ENCODE measurements at regions of chrX and their contacts with region 1.

Region 1: DNA sequence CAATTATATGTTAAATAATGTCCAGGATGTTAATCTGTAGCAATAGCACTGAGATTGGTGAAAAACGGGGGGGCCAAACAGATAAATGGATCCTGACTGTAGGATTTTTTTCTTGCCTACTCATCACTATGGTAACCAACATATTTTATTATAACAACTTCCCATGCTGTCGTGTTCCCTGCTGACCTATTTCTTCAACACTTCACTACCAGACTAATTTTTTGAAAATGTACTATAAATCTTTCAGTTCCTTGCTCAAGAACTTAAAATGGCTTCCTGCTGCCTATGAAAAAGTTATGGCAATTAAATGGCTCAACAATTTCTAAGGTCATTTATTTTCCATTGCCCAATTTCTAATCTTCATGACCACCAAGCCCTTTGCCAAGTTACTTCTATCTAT is 38.9 kb upstream of the CFAP47 start:
- DNase-seq: no peak
- H3K4me3 ChIP-seq: no peak overlapping the region
- H3K27ac ChIP-seq: no peak overlapping the region
- H3K4me1 ChIP-seq: no peaks in the 10 kb centered on the region
- H3K27me3 ChIP-seq: no peaks in the 10 kb centered on the region
- CTCF ChIP-seq: no peak
- EP300 ChIP-seq: no peak
- POLR2A ChIP-seq: no peak

Region 2: DNA sequence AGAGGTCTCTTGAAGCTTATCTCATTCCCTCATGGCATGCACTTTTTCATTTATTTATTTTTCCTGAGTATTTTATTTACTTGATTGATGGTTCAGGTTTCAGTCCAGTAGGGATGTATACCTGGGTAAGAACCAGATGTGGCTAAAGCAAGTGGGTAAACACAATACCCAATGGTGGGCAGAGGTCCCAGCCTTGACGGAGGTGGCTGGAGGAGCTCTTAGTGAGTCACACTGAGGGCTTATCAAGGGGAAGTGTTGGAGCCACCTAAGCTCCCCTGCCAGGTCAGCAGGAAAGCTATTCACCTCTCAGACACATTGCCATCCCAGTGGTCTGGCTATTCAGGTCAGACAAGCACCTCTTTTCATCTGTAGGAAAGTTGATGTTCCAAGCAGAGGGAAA is 318.6 kb before region 1 on chrX:
- intact Hi-C with region 1: no loop called
- DNase-seq: no peak
- H3K4me3 ChIP-seq: no peak overlapping the region
- H3K27ac ChIP-seq: no peak overlapping the region
- H3K4me1 ChIP-seq: no peaks in the 10 kb centered on the region
- H3K27me3 ChIP-seq: no peaks in the 10 kb centered on the region
- CTCF ChIP-seq: no peak
- EP300 ChIP-seq: no peak
- POLR2A ChIP-seq: no peak

Region 3: GRCh38 chrX:36849407-36849806 is 968.8 kb after region 1 on chrX:
- intact Hi-C with region 1: loop called in 1 of 4 experiments (anchors 5 kb)
- DNase-seq: no peak
- H3K4me3 ChIP-seq: no peak overlapping the region
- H3K27ac ChIP-seq: no peak overlapping the region
- H3K4me1 ChIP-seq: no peaks in the 10 kb centered on the region
- H3K27me3 ChIP-seq: no peaks in the 10 kb centered on the region
- CTCF ChIP-seq: no peak
- EP300 ChIP-seq: no peak
- POLR2A ChIP-seq: no peak